ENCODE measurements at regions of chr12 and their contacts with region 1.

Region 1: DNA sequence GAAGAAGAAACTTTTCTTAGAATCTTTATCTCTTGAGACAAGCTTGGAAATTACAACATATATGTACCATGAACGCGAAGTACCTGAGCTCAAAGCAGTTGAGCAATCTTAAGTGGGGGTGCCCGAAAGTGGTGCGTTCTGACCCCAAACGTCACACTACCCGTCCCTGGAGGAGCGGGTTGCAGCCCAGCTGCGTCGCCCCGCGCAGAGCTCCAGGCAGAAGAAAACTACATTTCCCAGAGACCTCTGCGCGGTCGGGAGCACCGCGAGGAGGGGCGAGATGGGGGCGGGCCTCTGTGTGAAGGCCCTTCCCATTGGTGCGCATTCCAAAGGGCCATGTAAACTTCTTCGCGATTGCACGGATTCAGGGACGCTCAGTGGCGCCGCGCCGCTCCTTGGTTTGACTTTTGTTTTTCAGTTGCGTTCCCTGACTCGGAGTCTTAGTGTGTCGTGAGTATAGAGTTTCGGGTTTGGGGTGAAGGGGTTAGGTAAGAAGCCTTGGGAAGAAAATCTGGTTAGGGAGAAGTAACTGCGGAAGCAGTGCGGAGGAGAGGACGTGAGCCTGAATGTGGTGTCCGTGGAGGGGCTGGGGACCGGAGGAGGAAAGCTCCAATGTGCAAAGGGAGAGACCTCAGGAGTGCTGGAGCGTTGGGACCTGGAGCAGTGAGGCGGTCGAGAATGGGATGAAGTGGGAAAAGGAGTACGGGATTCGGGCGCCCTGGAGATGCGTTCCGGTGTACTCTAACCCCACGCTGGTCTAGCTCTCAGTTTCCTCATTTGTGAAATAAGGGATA is at the start of gene CCDC77:
- DNase-seq: peak; percentile 78 to 95
- ATAC-seq: peak; percentile 97 to 99
- H3K4me3 ChIP-seq: peak within 1 kb of the TSS; percentile 72
- H3K27ac ChIP-seq: peak within 1 kb of the TSS; percentile 60 to 78
- H3K4me1 ChIP-seq: peaks cover 17% of the 10 kb centered on the region
- CTCF ChIP-seq: no peak; the same call in 1 of the 3 replicates
- EP300 ChIP-seq: no peak
- POLR2A ChIP-seq: no peak
- RAD21 ChIP-seq: no peak
- polyA plus RNA-seq, gene CCDC77: 15.6 and 23.1 TPM in 2 replicates

Region 2: GRCh38 chr12:84056-84455 is 317.4 kb before region 1 on chr12:
- CTCF ChIA-PET with region 1: no interaction called
- POLR2A ChIA-PET with region 1: no interaction called
- DNase-seq: no peak
- ATAC-seq: no peak
- H3K4me3 ChIP-seq: no peak overlapping the region
- H3K27ac ChIP-seq: no peak overlapping the region
- H3K4me1 ChIP-seq: no peaks in the 10 kb centered on the region
- CTCF ChIP-seq: no peak
- EP300 ChIP-seq: no peak
- POLR2A ChIP-seq: no peak
- RAD21 ChIP-seq: no peak

Region 3: DNA sequence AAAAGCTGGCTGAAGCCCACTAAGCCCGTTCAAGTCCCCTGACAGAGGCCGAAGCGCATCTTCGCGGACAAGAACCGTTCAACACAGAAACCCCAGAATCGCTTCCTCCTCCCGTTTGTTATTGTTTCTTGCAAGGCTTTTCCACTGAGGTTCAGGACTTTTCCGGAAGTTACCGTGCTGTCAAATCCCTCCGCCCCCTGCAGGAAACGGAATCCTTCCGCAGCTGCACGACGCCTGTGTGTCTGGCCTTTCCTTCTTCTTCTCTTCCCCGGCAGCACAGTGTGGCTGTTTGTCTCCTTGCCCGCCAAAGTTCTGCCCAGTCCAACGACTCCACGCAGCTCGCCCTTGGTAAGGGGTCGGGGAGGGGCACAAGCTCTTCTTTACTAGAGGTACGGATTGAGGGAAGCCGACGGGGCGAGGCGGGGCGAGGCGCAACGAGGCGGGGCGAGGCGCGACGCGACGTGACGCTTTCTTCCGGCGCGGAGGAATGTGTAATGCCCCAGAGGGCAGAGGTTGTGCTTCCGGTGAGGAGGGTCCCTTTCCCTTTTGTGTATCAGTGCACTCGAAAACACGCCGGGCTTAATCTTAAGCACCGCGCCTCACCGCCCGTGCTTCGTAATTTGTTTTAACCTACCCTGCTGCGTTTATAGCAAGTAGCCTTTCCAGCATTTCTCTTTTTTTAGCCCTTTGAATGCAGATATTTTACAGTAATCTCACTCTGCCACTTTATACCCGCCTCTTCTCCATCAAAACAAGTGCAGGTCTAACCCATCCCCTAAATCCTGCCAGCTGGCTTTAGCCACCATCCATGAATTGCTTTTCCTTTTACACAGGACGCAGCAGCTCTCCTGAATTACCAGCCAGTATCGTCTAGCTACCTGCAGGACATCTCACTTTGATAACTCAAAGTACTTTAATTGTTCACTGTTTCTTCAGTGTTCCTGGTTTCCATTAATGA is 12.0 kb before region 1 on chr12 and contains the start of gene KDM5A:
- CTCF ChIA-PET with region 1: interaction called, 9 read pairs
- POLR2A ChIA-PET with region 1: interaction called, 23 read pairs
- DNase-seq: peak; percentile 92 to 97
- ATAC-seq: peak; percentile 97 to 98
- H3K4me3 ChIP-seq: peak within 1 kb of the TSS; percentile 79
- H3K27ac ChIP-seq: peak within 1 kb of the TSS; percentile 90 to 97
- H3K4me1 ChIP-seq: peaks cover 25% of the 10 kb centered on the region; the same call in 2 of the 3 replicates
- CTCF ChIP-seq: no peak
- EP300 ChIP-seq: no peak
- POLR2A ChIP-seq: peak; percentile 52
- RAD21 ChIP-seq: no peak
- polyA plus RNA-seq, gene KDM5A: 42.6 and 45.0 TPM in 2 replicates

Region 4: DNA sequence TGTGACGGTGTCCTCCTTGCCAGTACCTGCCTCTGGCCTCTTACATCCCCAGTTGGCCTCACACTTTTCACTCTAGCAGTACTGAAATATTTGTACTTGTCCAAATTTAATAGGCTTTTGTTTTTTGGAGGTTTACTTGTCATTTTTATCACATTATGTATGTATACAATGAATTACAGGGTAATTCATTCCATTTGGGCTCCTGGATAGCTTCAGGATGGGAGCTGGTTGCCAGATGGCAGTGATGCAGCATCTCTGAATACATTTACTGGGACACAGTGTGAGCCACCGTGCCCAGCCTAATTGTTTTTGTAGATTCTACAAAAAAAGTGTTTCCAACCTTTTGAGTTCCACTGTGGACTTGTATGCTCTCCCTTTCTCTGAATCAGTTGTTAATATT is 13.4 kb after region 1 on chr12:
- CTCF ChIA-PET with region 1: interaction called, 16 read pairs
- POLR2A ChIA-PET with region 1: no interaction called
- DNase-seq: no peak
- ATAC-seq: no peak
- H3K4me3 ChIP-seq: no peak overlapping the region
- H3K27ac ChIP-seq: no peak overlapping the region
- H3K4me1 ChIP-seq: no peaks in the 10 kb centered on the region
- CTCF ChIP-seq: no peak
- EP300 ChIP-seq: no peak
- POLR2A ChIP-seq: no peak
- RAD21 ChIP-seq: no peak

Region 5: DNA sequence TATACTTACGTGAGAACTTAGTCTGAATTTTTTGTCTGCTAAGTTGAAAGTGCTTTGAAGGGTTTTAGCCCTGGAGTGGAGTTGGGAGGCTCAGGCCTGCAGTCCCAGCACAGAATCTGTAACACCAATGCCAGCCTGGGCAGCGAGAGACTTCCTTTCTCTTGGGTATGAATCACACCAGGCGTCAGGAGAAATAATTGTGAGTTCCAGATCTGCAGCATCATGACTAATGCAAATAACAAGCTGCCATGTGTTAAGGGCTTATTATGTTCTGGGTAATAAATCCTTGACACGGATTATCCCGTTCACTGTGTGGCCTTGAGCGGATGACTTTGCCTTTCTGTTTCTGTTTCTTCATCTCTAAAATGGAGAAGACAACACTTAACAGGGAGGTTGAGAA is 128.9 kb after region 1 on chr12:
- CTCF ChIA-PET with region 1: no interaction called
- POLR2A ChIA-PET with region 1: no interaction called
- DNase-seq: no peak
- ATAC-seq: no peak
- H3K4me3 ChIP-seq: no peak overlapping the region
- H3K27ac ChIP-seq: no peak overlapping the region
- H3K4me1 ChIP-seq: no peaks in the 10 kb centered on the region
- CTCF ChIP-seq: no peak
- EP300 ChIP-seq: no peak
- POLR2A ChIP-seq: no peak
- RAD21 ChIP-seq: no peak

Region 6: GRCh38 chr12:630656-631632 is 229.5 kb after region 1 on chr12:
- CTCF ChIA-PET with region 1: no interaction called
- POLR2A ChIA-PET with region 1: no interaction called
- DNase-seq: no peak
- ATAC-seq: no peak
- H3K4me3 ChIP-seq: no peak overlapping the region
- H3K27ac ChIP-seq: peak overlapping the region; percentile 96 to 97
- H3K4me1 ChIP-seq: peaks cover 58% of the 10 kb centered on the region
- CTCF ChIP-seq: no peak
- EP300 ChIP-seq: no peak
- POLR2A ChIP-seq: no peak
- RAD21 ChIP-seq: no peak